ENCODE measurements at regions of chr6 and their contacts with region 1.

Region 1: GRCh38 chr6:44058617-44059358 is 68.5 kb downstream of the MRPL14 start:
- DNase-seq: peak; percentile 95
- H3K4me3 ChIP-seq: no peak overlapping the region
- H3K27ac ChIP-seq: peak overlapping the region; percentile 93
- H3K4me1 ChIP-seq: peaks cover 39% of the 10 kb centered on the region
- H3K27me3 ChIP-seq: no peaks in the 10 kb centered on the region
- CTCF ChIP-seq: no peak
- POLR2A ChIP-seq: no peak

Region 2: GRCh38 chr6:43990627-43991619 is 67.9 kb before region 1 on chr6:
- CTCF ChIA-PET with region 1: no interaction called
- POLR2A ChIA-PET with region 1: no interaction called
- dilution Hi-C with region 1: no loop called
- intact Hi-C with region 1: no loop called
- DNase-seq: no peak
- H3K4me3 ChIP-seq: no peak overlapping the region
- H3K27ac ChIP-seq: no peak overlapping the region
- H3K4me1 ChIP-seq: no peaks in the 10 kb centered on the region
- H3K27me3 ChIP-seq: peaks cover 2 to 8% of the 10 kb centered on the region in 2 experiments
- CTCF ChIP-seq: no peak
- POLR2A ChIP-seq: no peak

Region 3: DNA sequence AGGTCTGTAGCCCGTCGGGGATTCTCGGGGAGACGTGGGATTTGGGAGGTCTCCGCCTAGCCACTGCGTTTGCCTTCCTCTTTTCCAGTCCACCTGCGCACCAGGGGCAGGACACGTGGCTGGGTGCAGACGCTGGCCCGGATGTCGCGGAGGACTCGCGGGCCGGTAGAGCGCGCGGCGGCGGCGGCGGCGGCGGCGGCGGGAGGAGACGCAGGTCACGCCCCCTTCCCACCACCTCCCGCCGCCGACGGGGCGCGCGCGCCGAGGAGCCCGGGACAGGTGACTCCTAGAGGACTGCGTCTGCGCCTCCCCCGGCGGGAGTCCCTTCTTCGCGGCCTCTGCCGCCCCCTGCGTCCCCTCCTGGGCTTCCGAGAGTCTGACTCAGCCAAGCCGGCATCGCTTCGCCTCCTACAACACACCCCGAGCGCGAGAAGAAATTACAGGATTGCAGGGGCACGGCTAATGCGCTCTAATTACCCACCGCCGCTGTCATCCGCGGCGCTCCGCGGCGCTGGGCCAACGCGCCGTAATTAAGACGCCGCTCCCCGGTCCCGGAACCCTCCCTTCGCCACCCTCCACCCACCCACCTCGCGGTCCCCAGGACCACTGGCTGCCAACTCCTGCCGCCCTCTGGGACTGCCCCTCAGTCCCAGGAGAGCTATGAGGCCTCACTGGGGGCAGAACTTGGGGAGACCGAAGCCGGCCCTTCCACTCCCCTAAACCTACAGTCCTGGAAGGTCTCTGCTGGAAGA is 56.0 kb before region 1 on chr6:
- CTCF ChIA-PET with region 1: no interaction called
- POLR2A ChIA-PET with region 1: no interaction called
- dilution Hi-C with region 1: no loop called
- intact Hi-C with region 1: loop called (anchors 5 kb)
- DNase-seq: peak; percentile 25
- H3K4me3 ChIP-seq: peak overlapping the region; percentile 2 to 41 (median 38)
- H3K27ac ChIP-seq: no peak overlapping the region
- H3K4me1 ChIP-seq: peaks cover 2% of the 10 kb centered on the region
- H3K27me3 ChIP-seq: peaks cover 26 to 27% of the 10 kb centered on the region in 2 experiments
- CTCF ChIP-seq: peak in 1 of 2 donors; percentile 18
- POLR2A ChIP-seq: no peak

Region 4: GRCh38 chr6:44127186-44128019 is 68.6 kb after region 1 on chr6 and contains the starts of genes MRPL14 and TMEM63B:
- CTCF ChIA-PET with region 1: no interaction called
- POLR2A ChIA-PET with region 1: no interaction called
- dilution Hi-C with region 1: no loop called
- intact Hi-C with region 1: no loop called
- DNase-seq: peak; percentile 81
- H3K4me3 ChIP-seq: peak within 1 kb of the TSS; percentile 88 to 90 (median 89)
- H3K27ac ChIP-seq: peak within 1 kb of the TSS; percentile 74
- H3K4me1 ChIP-seq: peaks cover 46% of the 10 kb centered on the region
- H3K27me3 ChIP-seq: no peaks in the 10 kb centered on the region
- CTCF ChIP-seq: no peak
- POLR2A ChIP-seq: peak; percentile 94
- total RNA-seq, gene MRPL14: 62.4 and 68.1 TPM in 2 replicates
- total RNA-seq, gene TMEM63B: 39.4 and 49.7 TPM in 2 replicates

Measured in endothelial cell of umbilical vein (primary cell).